ENCODE measurements at regions of chr3 and their contacts with region 1.

Region 1: DNA sequence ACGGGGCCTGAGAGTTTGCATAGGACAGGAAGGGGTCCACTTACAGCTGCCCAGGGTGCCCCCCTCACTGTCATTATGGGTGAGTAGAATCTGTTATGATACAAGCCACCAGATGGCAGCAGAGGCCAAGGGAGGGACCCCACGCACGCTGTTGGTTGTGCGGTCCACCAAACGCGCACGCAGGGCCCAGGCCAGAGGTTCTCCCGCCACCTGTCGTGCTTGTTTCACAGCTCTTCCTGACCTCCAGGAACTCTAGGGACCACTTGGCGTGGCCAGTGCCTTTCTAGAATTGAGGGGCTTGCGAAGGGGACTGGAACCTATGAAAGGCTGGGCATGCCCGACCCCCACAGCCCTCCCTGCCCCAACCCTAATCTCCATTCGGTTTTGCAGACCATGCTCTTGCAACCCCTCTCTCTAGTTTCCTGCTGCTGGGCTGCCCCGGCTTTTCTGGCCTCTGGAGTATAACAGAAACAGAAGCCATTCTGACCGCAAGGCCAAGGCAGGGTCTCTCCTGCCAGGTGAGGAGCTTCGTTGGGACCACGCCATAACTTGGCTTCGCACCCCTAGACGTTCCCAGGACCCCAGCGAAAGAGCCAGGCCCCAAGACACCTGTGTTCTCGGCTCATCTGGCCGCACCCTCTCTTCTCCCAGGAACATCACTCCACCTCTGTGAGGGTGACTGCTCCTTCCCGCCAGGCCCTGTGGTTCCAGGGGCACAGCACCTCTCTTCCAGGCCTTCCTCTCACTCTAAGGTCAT is 46.0 kb downstream of the ALDH1L1 start:
- DNase-seq: peak; percentile 63
- H3K4me3 Mint-ChIP-seq: no peak overlapping the region
- H3K27ac Mint-ChIP-seq: no peak overlapping the region
- H3K4me1 Mint-ChIP-seq: peaks cover 7% of the 10 kb centered on the region
- H3K27me3 Mint-ChIP-seq: peaks cover 20% of the 10 kb centered on the region
- CTCF ChIP-seq: peak; percentile 92

Region 2: GRCh38 chr3:126056681-126057546 is 77.5 kb before region 1 on chr3:
- CTCF ChIA-PET with region 1: no interaction called
- POLR2A ChIA-PET with region 1: no interaction called
- intact Hi-C with region 1: no loop called
- DNase-seq: peak; percentile 91
- H3K4me3 Mint-ChIP-seq: peak overlapping the region; percentile 53
- H3K27ac Mint-ChIP-seq: peak overlapping the region; percentile 98
- H3K4me1 Mint-ChIP-seq: peaks cover 48% of the 10 kb centered on the region
- H3K27me3 Mint-ChIP-seq: no peaks in the 10 kb centered on the region
- CTCF ChIP-seq: no peak

Region 3: GRCh38 chr3:126124148-126124868 is 10.1 kb before region 1 on chr3:
- CTCF ChIA-PET with region 1: interaction called, 19 read pairs
- POLR2A ChIA-PET with region 1: interaction called, 4 read pairs
- intact Hi-C with region 1: no loop called
- DNase-seq: no peak
- H3K4me3 Mint-ChIP-seq: no peak overlapping the region
- H3K27ac Mint-ChIP-seq: no peak overlapping the region
- H3K4me1 Mint-ChIP-seq: peaks cover 8% of the 10 kb centered on the region
- H3K27me3 Mint-ChIP-seq: peaks cover 11% of the 10 kb centered on the region
- CTCF ChIP-seq: no peak

Region 4: GRCh38 chr3:126245811-126246727 is 111.7 kb after region 1 on chr3:
- CTCF ChIA-PET with region 1: interaction called, 10 read pairs
- POLR2A ChIA-PET with region 1: no interaction called
- intact Hi-C with region 1: loop called (anchors 2 kb)
- DNase-seq: peak; percentile 62
- H3K4me3 Mint-ChIP-seq: no peak overlapping the region
- H3K27ac Mint-ChIP-seq: no peak overlapping the region
- H3K4me1 Mint-ChIP-seq: no peaks in the 10 kb centered on the region
- H3K27me3 Mint-ChIP-seq: no peaks in the 10 kb centered on the region
- CTCF ChIP-seq: peak; percentile 43

Region 5: GRCh38 chr3:126394575-126395228 is 260.3 kb after region 1 on chr3 and contains the start of gene CFAP100:
- CTCF ChIA-PET with region 1: interaction called, 88 read pairs
- POLR2A ChIA-PET with region 1: no interaction called
- intact Hi-C with region 1: loop called (anchors 1 kb)
- DNase-seq: no peak
- H3K4me3 Mint-ChIP-seq: no peak within 1 kb of the TSS
- H3K27ac Mint-ChIP-seq: no peak within 1 kb of the TSS
- H3K4me1 Mint-ChIP-seq: peaks cover 1% of the 10 kb centered on the region
- H3K27me3 Mint-ChIP-seq: peaks cover 7% of the 10 kb centered on the region
- CTCF ChIP-seq: no peak
- total RNA-seq, gene CFAP100: not detected in 2 replicates

Region 6: DNA sequence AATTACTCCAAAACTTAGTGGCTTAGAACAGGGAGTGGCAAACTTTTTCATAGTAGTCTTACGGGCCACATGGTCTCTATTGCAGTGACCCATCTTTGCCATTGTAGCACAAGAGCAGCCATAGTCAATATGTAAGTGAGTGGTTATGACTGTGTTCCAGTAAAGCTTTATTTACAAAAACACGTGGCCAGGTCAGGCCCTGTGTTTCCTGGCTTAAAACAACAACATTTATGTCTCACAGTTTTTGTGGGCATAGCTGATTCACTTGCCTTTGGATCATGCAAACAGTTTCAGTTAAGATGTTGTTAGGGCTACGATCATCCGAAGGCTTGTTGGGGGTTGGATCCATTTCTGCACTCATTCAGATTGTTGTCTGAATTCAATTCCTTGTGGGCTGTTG is 673.4 kb after region 1 on chr3:
- CTCF ChIA-PET with region 1: no interaction called
- POLR2A ChIA-PET with region 1: no interaction called
- intact Hi-C with region 1: no loop called
- DNase-seq: peak; percentile 5
- H3K4me3 Mint-ChIP-seq: no peak overlapping the region
- H3K27ac Mint-ChIP-seq: no peak overlapping the region
- H3K4me1 Mint-ChIP-seq: no peaks in the 10 kb centered on the region
- H3K27me3 Mint-ChIP-seq: no peaks in the 10 kb centered on the region
- CTCF ChIP-seq: no peak